ENCODE measurements at regions of chr17 and their contacts with region 1.

Region 1: DNA sequence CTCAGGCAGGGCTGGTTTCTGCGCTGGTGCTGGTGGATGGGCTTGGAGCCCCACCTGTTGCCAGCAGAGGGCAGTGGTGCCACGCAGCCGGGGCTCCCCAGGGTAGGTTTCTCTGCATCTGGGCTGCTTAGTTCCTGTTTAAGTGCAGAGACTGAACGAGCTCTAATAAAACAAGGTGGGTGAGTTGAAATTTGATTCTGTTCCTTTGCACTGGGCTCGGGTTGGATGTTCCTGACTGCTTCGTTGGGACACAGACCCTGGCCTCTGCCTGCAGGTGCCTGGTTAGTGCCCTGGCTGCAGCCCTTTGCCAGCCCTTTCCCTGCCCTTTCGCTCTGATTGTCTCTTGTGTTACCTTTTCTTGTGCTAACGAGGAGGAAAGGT is 30.0 kb downstream of the TBCD start:
- DNase-seq: peak; percentile 91
- ATAC-seq: peak; percentile 98
- H3K4me3 ChIP-seq: no peak overlapping the region
- H3K27ac ChIP-seq: no peak overlapping the region
- H3K4me1 ChIP-seq: peaks cover 6% of the 10 kb centered on the region
- H3K27me3 ChIP-seq: no peaks in the 10 kb centered on the region
- CTCF ChIP-seq: peak; percentile 98

Region 2: GRCh38 chr17:82592767-82593589 is 188.9 kb before region 1 on chr17:
- intact Hi-C with region 1: no loop called
- DNase-seq: peak; percentile 80
- ATAC-seq: peak; percentile 66
- H3K4me3 ChIP-seq: peak overlapping the region; percentile 69
- H3K27ac ChIP-seq: peak overlapping the region; percentile 90
- H3K4me1 ChIP-seq: peaks cover 39% of the 10 kb centered on the region
- H3K27me3 ChIP-seq: no peaks in the 10 kb centered on the region
- CTCF ChIP-seq: no peak

Region 3: DNA sequence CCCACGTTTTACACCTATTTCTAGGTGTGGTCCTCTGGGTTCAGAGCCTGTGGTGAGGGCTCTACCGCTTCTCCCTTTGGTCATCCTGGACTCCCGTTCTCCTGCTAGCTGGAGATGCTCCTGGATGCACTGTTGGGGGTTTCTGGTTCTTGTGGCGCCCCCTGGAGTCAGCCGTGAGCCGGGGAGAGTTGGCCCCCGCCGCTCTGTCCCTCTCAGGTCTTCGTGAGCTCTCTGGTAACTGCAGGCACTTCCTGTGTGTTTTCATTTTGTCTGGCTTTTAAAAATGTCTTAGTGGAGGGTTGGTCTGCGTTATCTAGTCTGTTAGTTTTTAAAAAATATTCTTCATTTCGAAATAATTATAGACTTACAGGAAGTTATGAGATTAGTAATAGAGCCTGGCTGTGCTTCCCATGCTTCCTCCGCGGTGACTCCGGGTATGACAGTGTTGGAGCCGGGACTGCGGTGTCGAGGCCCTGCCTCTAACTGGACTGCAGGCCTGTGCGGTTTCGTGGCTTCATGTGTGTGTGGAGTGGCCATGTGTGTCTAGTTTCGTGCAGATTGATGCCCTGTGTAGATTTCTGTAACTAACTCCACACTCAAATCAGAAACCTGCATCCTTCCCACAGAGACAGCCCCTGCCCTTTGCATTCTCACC is 135.9 kb after region 1 on chr17:
- intact Hi-C with region 1: loop called (anchors 10 kb)
- DNase-seq: no peak
- ATAC-seq: peak; percentile 32
- H3K4me3 ChIP-seq: no peak overlapping the region
- H3K27ac ChIP-seq: no peak overlapping the region
- H3K4me1 ChIP-seq: no peaks in the 10 kb centered on the region
- H3K27me3 ChIP-seq: no peaks in the 10 kb centered on the region
- CTCF ChIP-seq: peak; percentile 46

Region 4: GRCh38 chr17:82938873-82939620 is 157.2 kb after region 1 on chr17:
- intact Hi-C with region 1: no loop called
- DNase-seq: peak; percentile 64
- ATAC-seq: no peak
- H3K4me3 ChIP-seq: no peak overlapping the region
- H3K27ac ChIP-seq: no peak overlapping the region
- H3K4me1 ChIP-seq: no peaks in the 10 kb centered on the region
- H3K27me3 ChIP-seq: no peaks in the 10 kb centered on the region
- CTCF ChIP-seq: no peak

Measured in upper lobe of right lung (tissue), 1 donor.